Endothelial cell of umbilical vein (primary cell): ENCODE measurements at regions of chr13 and their contacts with region 1.

Region 1: GRCh38 chr13:33542283-33543088 is 256.9 kb upstream of the STARD13 start:
- DNase-seq: peak; percentile 100
- H3K4me3 ChIP-seq: peak overlapping the region; percentile 24 to 67 (median 37)
- H3K27ac ChIP-seq: peak overlapping the region; percentile 100
- H3K4me1 ChIP-seq: peaks cover 23% of the 10 kb centered on the region
- H3K27me3 ChIP-seq: no peaks in the 10 kb centered on the region
- CTCF ChIP-seq: peak; percentile 94 to 98
- POLR2A ChIP-seq: peak; percentile 64

Region 2: DNA sequence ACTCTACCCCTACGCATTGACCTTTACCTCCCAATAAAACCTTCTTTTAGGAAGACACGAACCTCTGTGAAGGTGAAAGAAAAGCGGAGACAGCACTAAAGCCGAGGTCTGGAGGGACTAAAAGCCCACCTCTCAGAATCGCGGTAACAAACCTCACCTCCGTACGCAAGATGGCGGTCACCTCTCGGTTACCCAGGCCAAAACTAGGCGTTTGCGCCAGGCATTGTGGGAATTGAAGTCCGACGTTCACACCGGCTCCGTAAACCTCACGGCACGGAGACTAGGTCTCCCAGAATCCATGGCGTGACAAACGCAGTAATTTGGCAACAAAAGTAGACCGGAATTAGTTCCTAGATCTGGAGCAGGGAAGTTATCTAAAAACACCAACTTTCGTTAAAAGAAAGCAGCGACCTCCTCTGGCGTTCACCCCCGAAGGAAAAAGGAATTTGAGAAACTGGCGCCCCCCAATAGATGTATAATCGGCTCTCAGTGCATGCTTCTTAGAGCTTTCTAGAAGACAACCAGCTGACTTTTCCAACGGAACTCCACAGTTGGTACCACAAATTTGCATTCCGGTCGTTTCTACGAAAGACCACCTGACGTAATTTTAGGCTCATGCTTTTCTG is 1003.8 kb before region 1 on chr13 and contains the start of gene N4BP2L2:
- CTCF ChIA-PET with region 1: no interaction called
- POLR2A ChIA-PET with region 1: no interaction called
- dilution Hi-C with region 1: no loop called
- intact Hi-C with region 1: loop called (anchors 1 kb)
- DNase-seq: peak; percentile 99
- H3K4me3 ChIP-seq: peak within 1 kb of the TSS; percentile 75 to 94 (median 83)
- H3K27ac ChIP-seq: peak within 1 kb of the TSS; percentile 84
- H3K4me1 ChIP-seq: peaks cover 19% of the 10 kb centered on the region
- H3K27me3 ChIP-seq: peaks cover 3 to 5% of the 10 kb centered on the region in 2 experiments
- CTCF ChIP-seq: peak; percentile 18 to 41
- POLR2A ChIP-seq: peak; percentile 67
- total RNA-seq, gene N4BP2L2: 95.4 and 101 TPM in 2 replicates

Region 3: DNA sequence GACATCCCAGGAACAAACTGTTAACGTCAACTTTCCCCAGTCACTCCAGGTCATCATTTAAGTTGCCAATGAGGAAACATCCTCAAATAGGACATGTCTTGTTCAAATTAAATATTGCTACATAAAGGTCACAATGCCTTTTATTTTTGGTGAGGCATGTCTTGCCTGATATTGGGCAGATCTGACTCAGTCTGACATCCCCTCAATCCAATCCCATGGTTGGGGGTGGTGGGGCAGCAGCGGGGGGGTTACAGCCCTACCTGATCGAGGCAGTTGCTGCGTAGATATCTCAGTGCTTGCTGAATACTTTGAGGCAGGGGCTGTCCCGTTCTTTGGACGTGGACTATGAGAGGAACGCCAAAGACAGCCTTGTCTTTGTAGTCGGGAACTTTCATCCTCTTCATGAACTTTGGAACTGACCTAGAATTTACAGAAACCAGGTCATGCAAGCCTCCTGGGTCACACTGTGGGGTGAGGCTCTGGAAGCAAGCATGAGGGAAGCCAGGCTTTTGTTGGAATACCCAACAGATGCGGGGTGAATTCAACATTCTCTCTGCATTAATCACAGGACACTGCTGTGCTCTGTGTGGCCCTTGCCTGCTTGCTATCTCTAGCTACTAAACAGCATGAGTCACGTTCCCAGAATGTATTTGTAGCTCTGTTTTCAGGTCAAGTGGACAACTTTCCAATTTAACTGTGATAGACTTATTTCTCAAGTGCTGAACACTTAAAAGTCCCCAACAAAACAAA is 416.5 kb before region 1 on chr13:
- CTCF ChIA-PET with region 1: interaction called, 3 read pairs
- POLR2A ChIA-PET with region 1: no interaction called
- dilution Hi-C with region 1: no loop called
- intact Hi-C with region 1: loop called (anchors 2 kb)
- DNase-seq: peak; percentile 94
- H3K4me3 ChIP-seq: no peak overlapping the region
- H3K27ac ChIP-seq: peak overlapping the region; percentile 93
- H3K4me1 ChIP-seq: peaks cover 51% of the 10 kb centered on the region
- H3K27me3 ChIP-seq: no peaks in the 10 kb centered on the region
- CTCF ChIP-seq: no peak
- POLR2A ChIP-seq: peak; percentile 48

Region 4: DNA sequence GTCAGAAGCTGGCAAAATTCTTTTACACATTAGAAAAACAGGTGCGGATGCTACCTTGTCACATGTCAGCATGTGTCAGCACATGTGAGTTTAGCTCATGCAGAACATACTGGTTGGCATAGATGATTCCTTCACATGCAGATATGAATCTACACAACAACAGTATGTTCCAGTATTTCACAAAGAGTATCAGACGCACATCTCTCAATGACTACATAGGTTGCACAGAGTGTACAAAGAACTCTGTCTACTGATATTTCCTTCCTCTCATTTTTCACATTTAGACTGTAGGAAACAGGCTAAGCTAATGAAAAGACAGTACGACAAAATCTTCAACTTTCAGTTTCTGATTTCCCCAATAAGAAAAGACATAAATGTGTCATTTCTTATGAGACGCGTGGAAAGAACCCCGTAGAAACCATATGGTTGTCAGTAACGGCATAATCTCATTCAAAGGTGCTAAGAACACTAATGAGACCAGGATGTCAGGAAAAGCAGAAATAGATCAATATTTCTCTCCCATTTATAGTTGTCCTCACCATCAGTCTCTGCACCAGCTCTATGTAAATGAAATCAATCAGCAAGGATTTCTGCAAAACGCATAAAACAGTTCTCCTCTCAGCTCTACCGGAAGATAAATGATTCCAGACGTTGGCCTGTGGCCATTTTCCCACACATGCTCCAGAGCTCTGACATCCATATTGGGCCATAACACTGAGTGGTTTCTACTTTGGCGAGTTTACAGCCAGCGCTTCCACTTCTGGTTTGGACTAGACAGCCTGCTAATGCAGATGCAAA is 338.2 kb before region 1 on chr13:
- CTCF ChIA-PET with region 1: interaction called, 7 read pairs
- POLR2A ChIA-PET with region 1: no interaction called
- dilution Hi-C with region 1: no loop called
- intact Hi-C with region 1: loop called (anchors 1 kb)
- DNase-seq: peak; percentile 89
- H3K4me3 ChIP-seq: no peak overlapping the region
- H3K27ac ChIP-seq: peak overlapping the region; percentile 76
- H3K4me1 ChIP-seq: peaks cover 54% of the 10 kb centered on the region
- H3K27me3 ChIP-seq: no peaks in the 10 kb centered on the region
- CTCF ChIP-seq: no peak
- POLR2A ChIP-seq: no peak

Region 5: GRCh38 chr13:33349986-33350826 is 192.3 kb before region 1 on chr13:
- CTCF ChIA-PET with region 1: interaction called, 4 read pairs
- POLR2A ChIA-PET with region 1: no interaction called
- dilution Hi-C with region 1: no loop called
- intact Hi-C with region 1: loop called (anchors 1 kb)
- DNase-seq: peak; percentile 49
- H3K4me3 ChIP-seq: peak overlapping the region; percentile 78 to 86 (median 82)
- H3K27ac ChIP-seq: peak overlapping the region; percentile 78
- H3K4me1 ChIP-seq: peaks cover 16% of the 10 kb centered on the region
- H3K27me3 ChIP-seq: no peaks in the 10 kb centered on the region
- CTCF ChIP-seq: no peak
- POLR2A ChIP-seq: no peak

Region 6: DNA sequence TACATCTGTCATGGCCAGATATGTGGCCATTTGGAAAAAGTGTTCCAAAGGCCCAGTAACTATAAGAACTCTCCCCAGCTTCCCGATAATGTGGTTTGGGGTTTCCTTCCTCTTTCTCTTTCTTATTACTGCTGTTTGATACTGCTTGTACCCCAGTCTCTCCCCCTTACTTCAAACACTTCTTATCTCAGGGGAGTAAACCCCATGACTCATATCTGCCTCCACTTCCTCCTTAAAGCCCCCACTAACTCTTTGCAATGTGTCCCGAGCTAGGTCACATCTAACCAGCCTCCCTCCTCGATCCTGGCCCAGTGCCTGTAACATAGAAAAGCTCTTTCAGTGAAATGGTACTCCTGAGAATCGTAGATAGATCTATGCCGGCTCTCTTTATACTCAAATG is 174.6 kb before region 1 on chr13:
- CTCF ChIA-PET with region 1: no interaction called
- POLR2A ChIA-PET with region 1: no interaction called
- dilution Hi-C with region 1: no loop called
- intact Hi-C with region 1: no loop called
- DNase-seq: peak; percentile 15
- H3K4me3 ChIP-seq: no peak overlapping the region
- H3K27ac ChIP-seq: no peak overlapping the region
- H3K4me1 ChIP-seq: peaks cover 5% of the 10 kb centered on the region
- H3K27me3 ChIP-seq: no peaks in the 10 kb centered on the region
- CTCF ChIP-seq: no peak
- POLR2A ChIP-seq: no peak

Region 7: DNA sequence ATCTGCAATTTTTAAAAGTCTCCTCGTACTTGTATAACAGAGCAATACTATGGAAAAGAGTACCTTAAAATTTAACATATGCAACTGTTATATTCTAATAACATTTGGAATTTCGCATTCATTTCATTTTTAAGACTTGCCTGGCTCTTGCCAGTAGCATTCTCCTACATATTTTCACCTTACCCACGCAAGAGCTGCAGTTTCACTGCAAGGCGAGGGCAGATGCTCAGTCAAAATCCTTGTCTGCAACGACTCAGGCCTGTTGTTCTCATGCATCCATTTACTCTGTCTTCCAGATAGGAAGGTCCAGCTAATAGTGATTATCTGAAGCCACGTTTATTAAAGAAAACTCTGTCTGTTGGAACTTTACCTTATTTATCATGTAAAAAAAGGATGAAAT is 48.5 kb after region 1 on chr13:
- CTCF ChIA-PET with region 1: no interaction called
- POLR2A ChIA-PET with region 1: no interaction called
- dilution Hi-C with region 1: no loop called
- intact Hi-C with region 1: no loop called
- DNase-seq: no peak
- H3K4me3 ChIP-seq: no peak overlapping the region
- H3K27ac ChIP-seq: no peak overlapping the region
- H3K4me1 ChIP-seq: no peaks in the 10 kb centered on the region
- H3K27me3 ChIP-seq: no peaks in the 10 kb centered on the region
- CTCF ChIP-seq: no peak
- POLR2A ChIP-seq: no peak

Region 8: DNA sequence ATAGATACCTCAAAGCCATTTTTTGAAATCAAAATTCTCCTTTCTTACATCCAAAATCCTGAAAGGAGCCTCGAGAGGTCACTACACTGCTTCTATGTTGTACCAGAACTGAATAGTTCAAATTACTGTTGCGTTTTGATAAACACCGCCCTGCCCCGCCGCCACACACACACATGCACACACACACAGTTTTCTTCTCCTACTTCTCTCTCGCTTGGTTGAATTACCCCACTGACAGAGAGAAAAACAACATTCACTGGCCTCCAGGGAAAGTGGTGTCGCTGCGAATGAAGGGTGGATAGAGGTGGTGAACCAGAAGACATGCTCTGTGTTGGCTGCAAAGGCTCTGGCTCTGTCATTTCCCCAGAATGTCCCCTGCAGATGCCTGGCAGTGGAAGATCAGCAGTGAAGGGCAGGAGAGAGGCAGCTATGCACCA is 92.1 kb after region 1 on chr13:
- CTCF ChIA-PET with region 1: no interaction called
- POLR2A ChIA-PET with region 1: no interaction called
- dilution Hi-C with region 1: no loop called
- intact Hi-C with region 1: no loop called
- DNase-seq: no peak
- H3K4me3 ChIP-seq: no peak overlapping the region
- H3K27ac ChIP-seq: no peak overlapping the region
- H3K4me1 ChIP-seq: no peaks in the 10 kb centered on the region
- H3K27me3 ChIP-seq: no peaks in the 10 kb centered on the region
- CTCF ChIP-seq: no peak
- POLR2A ChIP-seq: no peak

Region 9: GRCh38 chr13:33723772-33724435 is 181.4 kb after region 1 on chr13:
- CTCF ChIA-PET with region 1: interaction called, 131 read pairs
- POLR2A ChIA-PET with region 1: interaction called, 4 read pairs
- dilution Hi-C with region 1: no loop called
- intact Hi-C with region 1: loop called (anchors 1 kb)
- DNase-seq: peak; percentile 85
- H3K4me3 ChIP-seq: no peak overlapping the region
- H3K27ac ChIP-seq: no peak overlapping the region
- H3K4me1 ChIP-seq: peaks cover 10% of the 10 kb centered on the region
- H3K27me3 ChIP-seq: no peaks in the 10 kb centered on the region
- CTCF ChIP-seq: peak; percentile 62 to 70
- POLR2A ChIP-seq: no peak